T-cell (primary cell): ENCODE measurements at regions of chr2 and their contacts with region 1.

Region 1: DNA sequence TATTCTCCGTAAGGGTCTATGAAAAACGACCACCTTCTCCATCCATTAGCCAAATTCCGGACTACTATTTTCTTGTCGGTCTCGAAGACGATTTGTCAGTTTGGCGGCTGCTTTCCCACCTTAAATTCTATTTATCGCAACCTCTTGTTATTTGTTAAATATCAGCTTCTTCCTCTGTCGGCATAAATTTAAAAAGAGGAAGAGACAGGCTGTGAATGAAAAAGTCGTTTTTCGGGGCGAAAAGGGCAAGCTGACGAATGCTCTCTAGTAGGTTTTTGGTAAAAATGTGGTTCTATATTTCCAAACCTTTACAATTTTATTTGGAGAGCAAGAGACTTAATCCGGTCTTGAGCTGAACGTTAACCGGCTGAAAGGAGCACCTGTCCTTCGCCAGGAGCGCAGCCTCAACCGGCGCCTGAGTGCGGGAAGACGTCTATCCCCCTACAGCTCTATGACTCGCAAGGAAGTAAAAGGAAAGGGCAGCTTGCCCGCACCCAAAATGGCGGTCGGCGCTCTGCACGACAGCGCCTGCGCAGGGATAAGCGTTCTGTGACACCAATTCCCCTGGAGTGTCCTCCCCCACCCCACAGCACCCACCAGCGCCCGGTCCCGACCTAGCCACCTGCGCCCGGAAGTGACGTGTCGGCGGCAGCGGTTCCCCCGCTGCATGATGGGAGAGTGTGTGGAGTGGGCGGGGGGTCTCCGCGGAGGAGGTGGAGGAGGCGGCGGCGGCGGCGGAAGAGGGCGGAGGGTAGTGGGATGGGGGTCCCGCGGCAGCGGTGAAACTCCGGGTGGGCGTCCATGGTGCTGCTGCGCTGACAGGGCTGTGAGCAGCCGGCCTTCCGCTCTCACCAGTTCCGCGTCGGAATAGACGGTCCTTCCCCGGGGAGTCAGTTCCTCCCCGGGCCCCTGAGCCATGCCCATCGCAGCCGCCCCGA is at the start of gene AFTPH:
- DNase-seq: peak; percentile 97 to 100 (median 100)
- ATAC-seq: peak; percentile 92 to 97 (median 94)
- H3K4me3 ChIP-seq: peak within 1 kb of the TSS; percentile 78 to 98
- H3K4me3 Mint-ChIP-seq: peak within 1 kb of the TSS; percentile 99 to 100 (median 99)
- H3K27ac ChIP-seq: peak within 1 kb of the TSS; percentile 93
- H3K27ac Mint-ChIP-seq: peak within 1 kb of the TSS; percentile 97 to 99
- H3K4me1 ChIP-seq: peaks cover 9 to 25% of the 10 kb centered on the region in 2 experiments
- H3K4me1 Mint-ChIP-seq: peaks cover 42 to 49% (median 44%) of the 10 kb centered on the region in 3 donors
- H3K27me3 ChIP-seq: peaks cover 0 to 3% of the 10 kb centered on the region in 2 experiments
- H3K27me3 Mint-ChIP-seq: no peaks in the 10 kb centered on the region
- total RNA-seq, gene AFTPH: 33.4 to 42.5 (median 37.9) TPM

Region 2: DNA sequence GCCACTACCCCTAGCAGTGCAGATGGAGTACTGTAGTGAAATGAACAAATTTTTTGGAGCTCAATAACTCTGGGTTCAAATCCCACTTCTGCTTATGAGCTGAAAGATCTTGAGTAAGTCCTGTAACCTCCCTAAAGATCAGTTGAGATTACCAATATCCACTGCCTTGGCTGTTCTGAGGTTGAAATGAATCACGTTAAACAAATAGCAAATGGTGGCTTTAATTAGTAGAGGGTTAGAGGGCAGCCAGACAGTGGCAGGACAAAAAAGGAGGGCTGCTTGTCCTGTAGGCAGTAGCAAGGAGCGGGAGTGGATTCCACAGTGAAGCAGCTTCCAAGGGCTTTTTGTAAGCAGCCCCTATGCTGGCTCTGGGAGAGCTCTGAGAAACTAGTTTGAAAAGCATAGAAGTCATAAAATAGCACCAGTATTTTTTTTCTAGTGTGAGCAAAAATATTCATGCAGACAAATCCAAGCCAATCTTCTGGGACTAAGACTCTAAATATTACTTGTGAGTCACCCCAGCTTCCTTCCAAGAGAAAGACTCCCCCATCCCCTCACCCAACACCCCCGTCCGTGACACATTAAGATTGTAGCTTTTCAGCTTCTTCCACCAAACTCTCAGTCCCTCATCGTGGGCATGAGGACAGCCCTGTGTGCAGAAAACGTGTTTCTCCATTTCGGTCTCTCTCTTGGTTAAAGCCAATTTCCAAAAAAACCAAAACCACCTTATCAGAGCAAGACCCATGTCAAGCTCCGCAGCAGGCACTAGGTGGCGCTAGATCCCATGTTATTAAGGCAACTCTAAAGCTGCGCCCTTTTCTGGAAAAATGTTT is 193.4 kb before region 1 on chr2:
- CTCF ChIA-PET with region 1: interaction called, 7 to 32 read pairs
- POLR2A ChIA-PET with region 1: no interaction called
- DNase-seq: peak; percentile 41 to 93 (median 72)
- ATAC-seq: peak in 2 of 4 experiments; percentile 25 to 29
- H3K4me3 ChIP-seq: no peak overlapping the region
- H3K4me3 Mint-ChIP-seq: peak overlapping the region in 1 of 3 donors; percentile 29
- H3K27ac ChIP-seq: no peak overlapping the region
- H3K27ac Mint-ChIP-seq: peak overlapping the region; percentile 72 to 81
- H3K4me1 ChIP-seq: peaks cover 24 to 38% of the 10 kb centered on the region in 2 experiments
- H3K4me1 Mint-ChIP-seq: peaks cover 35 to 43% (median 41%) of the 10 kb centered on the region in 3 donors
- H3K27me3 ChIP-seq: no peaks in the 10 kb centered on the region
- H3K27me3 Mint-ChIP-seq: no peaks in the 10 kb centered on the region

Region 3: DNA sequence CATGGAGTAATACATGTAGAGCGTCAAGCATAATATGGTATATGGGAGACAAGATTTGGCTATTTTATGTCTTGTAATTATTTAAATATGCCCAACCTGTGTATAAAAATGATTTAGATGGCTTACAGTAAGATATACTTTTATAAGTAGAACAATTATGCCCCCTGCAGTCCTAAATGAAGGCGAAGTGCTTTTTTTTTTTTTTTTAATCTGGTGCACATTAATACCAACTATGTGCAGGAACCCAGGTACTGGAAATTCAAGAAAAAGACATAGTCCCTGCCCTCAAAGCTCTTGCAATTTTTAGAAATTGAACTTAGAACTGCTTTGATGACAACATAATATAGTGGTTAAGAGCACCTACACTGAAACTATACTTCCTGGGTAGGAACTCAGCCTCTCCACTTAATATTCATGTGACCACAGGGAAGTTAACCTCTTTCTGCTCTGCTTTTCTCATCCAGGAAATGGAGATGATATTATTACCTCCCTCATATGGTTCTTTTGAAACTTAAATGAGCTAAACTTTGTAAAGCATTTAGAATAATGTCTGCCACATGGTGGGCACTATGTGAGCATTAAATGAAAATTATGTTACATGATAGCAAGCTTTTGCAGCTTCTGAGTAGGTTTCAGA is 38.3 kb after region 1 on chr2:
- CTCF ChIA-PET with region 1: interaction called, 22 to 58 read pairs
- POLR2A ChIA-PET with region 1: interaction called in 1 of 2 experiments, 3 read pairs
- DNase-seq: peak in 3 of 35 experiments; percentile 3 to 59 (median 7)
- ATAC-seq: peak in 2 of 4 experiments; percentile 47 to 79
- H3K4me3 ChIP-seq: no peak overlapping the region
- H3K4me3 Mint-ChIP-seq: no peak overlapping the region
- H3K27ac ChIP-seq: no peak overlapping the region
- H3K27ac Mint-ChIP-seq: peak overlapping the region in 1 of 2 donors; percentile 48
- H3K4me1 ChIP-seq: peaks cover 3 to 12% of the 10 kb centered on the region in 2 experiments
- H3K4me1 Mint-ChIP-seq: peaks cover 27 to 32% (median 30%) of the 10 kb centered on the region in 3 donors
- H3K27me3 ChIP-seq: no peaks in the 10 kb centered on the region
- H3K27me3 Mint-ChIP-seq: no peaks in the 10 kb centered on the region

Region 4: GRCh38 chr2:64606479-64607363 is 82.8 kb after region 1 on chr2:
- CTCF ChIA-PET with region 1: interaction called in 1 of 2 experiments, 15 read pairs
- POLR2A ChIA-PET with region 1: no interaction called
- DNase-seq: peak; percentile 58 to 94 (median 87)
- ATAC-seq: peak; percentile 87 to 95 (median 88)
- H3K4me3 ChIP-seq: peak overlapping the region in 1 of 2 donors; percentile 41
- H3K4me3 Mint-ChIP-seq: peak overlapping the region; percentile 63 to 80 (median 65)
- H3K27ac ChIP-seq: peak overlapping the region; percentile 47
- H3K27ac Mint-ChIP-seq: peak overlapping the region; percentile 15 to 74
- H3K4me1 ChIP-seq: peaks cover 8 to 38% of the 10 kb centered on the region in 2 experiments
- H3K4me1 Mint-ChIP-seq: peaks cover 21 to 38% (median 21%) of the 10 kb centered on the region in 3 donors
- H3K27me3 ChIP-seq: peaks cover 0 to 4% of the 10 kb centered on the region in 2 experiments
- H3K27me3 Mint-ChIP-seq: no peaks in the 10 kb centered on the region

Region 5: DNA sequence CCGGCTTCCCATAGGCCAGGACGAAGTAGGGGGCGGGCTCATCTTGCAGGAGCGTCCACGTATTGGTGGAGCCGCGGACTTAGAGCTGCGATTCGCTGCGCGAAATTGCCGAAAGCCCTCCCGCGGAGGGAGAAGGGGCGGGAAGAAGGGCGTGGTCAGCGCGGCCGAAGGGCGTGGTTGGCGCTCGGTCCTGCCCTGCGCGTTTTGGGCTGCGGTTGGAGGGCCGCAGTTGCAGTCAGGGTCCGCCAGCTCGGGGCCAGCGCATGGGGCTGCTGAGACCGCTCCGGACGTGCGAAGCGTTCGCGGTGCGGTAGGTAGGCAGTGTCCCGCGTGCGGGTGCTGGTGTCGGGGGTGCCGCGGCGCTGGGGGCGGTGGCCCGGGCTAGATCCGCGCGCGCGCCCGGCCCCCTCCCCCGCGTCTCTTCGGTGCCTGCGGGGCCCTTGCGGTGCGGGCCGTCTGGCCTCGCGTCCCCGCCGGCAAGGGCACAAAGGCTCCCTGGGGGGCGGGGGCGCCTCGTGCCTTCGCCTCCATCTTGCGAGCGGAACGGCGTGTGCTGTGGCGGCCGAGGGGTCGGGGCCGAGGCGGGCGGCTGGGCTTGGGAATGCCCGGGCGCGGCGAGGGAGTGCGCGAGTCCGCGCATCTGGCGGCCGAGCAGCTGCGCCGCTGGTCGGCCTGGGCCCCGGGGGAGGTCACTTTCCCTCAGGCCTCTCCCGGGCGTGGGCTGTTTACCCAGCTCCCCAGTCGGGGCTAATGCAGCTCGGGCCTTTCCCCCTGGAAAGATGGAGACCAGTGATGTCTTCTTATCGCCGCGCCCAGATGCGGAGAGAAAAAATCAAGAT is 532.5 kb after region 1 on chr2 and contains the start of gene CEP68:
- CTCF ChIA-PET with region 1: interaction called in 1 of 2 experiments, 10 read pairs
- POLR2A ChIA-PET with region 1: no interaction called
- DNase-seq: peak; percentile 90 to 97 (median 94)
- ATAC-seq: peak; percentile 90 to 93 (median 90)
- H3K4me3 ChIP-seq: peak within 1 kb of the TSS; percentile 52 to 86
- H3K4me3 Mint-ChIP-seq: peak within 1 kb of the TSS; percentile 95 to 97 (median 96)
- H3K27ac ChIP-seq: peak within 1 kb of the TSS; percentile 63
- H3K27ac Mint-ChIP-seq: peak within 1 kb of the TSS; percentile 92 to 94
- H3K4me1 ChIP-seq: peaks cover 20 to 59% of the 10 kb centered on the region in 2 experiments
- H3K4me1 Mint-ChIP-seq: peaks cover 70 to 74% (median 72%) of the 10 kb centered on the region in 3 donors
- H3K27me3 ChIP-seq: no peaks in the 10 kb centered on the region
- H3K27me3 Mint-ChIP-seq: no peaks in the 10 kb centered on the region
- total RNA-seq, gene CEP68: 24.1 to 41.4 (median 37.4) TPM